PC-9 (cell line): ENCODE measurements at regions of chr17 and their contacts with region 1.

Region 1: DNA sequence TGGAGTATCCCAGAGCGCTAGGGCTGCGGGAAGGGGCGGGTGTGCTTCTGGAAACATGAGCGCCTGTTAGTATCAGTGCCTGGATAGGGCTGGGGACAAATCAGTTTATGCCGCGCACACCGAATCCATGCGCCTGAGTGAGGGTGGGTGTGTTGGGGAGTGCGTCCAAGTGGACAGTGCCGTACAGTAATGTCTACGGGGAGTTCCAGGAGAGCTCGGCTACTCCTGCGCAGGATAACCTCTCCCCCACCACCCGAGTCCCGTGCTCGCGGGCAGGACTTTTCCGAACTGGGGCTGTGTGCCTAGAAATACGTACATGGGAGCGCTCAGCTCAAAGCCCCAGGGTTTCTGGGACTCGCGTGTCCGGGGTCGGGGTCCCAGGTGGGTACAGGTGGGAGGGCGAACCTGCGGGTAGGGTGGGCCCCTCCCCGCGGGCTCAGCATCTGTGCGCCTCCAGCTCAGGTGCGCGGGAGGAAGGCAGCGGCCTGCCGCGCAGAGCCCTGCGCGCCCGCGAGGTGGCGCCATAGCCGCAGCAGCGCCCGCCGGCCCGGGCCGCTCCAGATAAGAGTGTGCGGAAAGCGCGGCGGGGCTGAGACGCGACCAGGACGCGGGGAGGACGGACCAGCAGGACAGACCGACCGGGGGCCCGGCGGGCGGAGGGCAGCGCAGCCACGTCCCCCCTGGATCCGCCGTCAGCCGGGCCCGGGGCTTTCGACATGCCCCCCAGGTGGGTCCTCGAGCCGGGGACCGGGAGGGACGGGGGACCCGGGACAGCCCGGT is at the start of gene HIC1:
- DNase-seq: peak; percentile 57 to 84
- H3K4me3 ChIP-seq: peak within 1 kb of the TSS; percentile 66
- H3K27ac ChIP-seq: no peak within 1 kb of the TSS
- H3K4me1 ChIP-seq: peaks cover 7% of the 10 kb centered on the region; the same call in 1 of the 2 replicates
- H3K27me3 ChIP-seq: peaks cover 12% of the 10 kb centered on the region
- CTCF ChIP-seq: peak; percentile 81
- total RNA-seq, gene HIC1: 0.63 and 1.6 TPM in 2 replicates

Region 2: GRCh38 chr17:1820528-1821252 is 234.0 kb before region 1 on chr17:
- CTCF ChIA-PET with region 1: no interaction called
- POLR2A ChIA-PET with region 1: no interaction called
- intact Hi-C with region 1: no loop called
- DNase-seq: no peak
- H3K4me3 ChIP-seq: no peak overlapping the region
- H3K27ac ChIP-seq: no peak overlapping the region
- H3K4me1 ChIP-seq: no peaks in the 10 kb centered on the region
- H3K27me3 ChIP-seq: no peaks in the 10 kb centered on the region
- CTCF ChIP-seq: no peak

Region 3: DNA sequence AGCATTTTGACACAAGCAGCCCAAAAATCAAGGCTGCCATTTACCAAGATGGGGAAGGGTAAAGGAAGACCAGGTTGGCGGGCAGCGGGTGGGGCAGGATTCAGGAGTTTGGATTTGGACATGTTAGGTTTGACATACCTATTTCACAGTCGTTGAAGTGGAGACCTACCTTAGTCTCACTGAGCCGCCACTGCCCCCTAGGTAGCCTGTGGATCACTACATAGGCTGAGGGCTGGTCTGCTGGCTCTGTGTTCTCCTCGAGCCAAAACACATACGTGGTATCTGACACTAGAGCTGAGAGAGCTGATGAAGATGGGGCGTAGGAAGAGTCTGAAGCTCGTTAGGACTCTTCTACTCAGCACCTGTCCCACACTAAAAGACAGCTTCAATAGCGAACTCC is 115.3 kb after region 1 on chr17:
- CTCF ChIA-PET with region 1: no interaction called
- POLR2A ChIA-PET with region 1: no interaction called
- intact Hi-C with region 1: loop called (anchors 1 kb)
- DNase-seq: peak in 1 of 2 experiments; percentile 22
- H3K4me3 ChIP-seq: no peak overlapping the region
- H3K27ac ChIP-seq: no peak overlapping the region
- H3K4me1 ChIP-seq: no peaks in the 10 kb centered on the region
- H3K27me3 ChIP-seq: no peaks in the 10 kb centered on the region
- CTCF ChIP-seq: peak; percentile 57; the same call in 1 of the 2 replicates

Region 4: DNA sequence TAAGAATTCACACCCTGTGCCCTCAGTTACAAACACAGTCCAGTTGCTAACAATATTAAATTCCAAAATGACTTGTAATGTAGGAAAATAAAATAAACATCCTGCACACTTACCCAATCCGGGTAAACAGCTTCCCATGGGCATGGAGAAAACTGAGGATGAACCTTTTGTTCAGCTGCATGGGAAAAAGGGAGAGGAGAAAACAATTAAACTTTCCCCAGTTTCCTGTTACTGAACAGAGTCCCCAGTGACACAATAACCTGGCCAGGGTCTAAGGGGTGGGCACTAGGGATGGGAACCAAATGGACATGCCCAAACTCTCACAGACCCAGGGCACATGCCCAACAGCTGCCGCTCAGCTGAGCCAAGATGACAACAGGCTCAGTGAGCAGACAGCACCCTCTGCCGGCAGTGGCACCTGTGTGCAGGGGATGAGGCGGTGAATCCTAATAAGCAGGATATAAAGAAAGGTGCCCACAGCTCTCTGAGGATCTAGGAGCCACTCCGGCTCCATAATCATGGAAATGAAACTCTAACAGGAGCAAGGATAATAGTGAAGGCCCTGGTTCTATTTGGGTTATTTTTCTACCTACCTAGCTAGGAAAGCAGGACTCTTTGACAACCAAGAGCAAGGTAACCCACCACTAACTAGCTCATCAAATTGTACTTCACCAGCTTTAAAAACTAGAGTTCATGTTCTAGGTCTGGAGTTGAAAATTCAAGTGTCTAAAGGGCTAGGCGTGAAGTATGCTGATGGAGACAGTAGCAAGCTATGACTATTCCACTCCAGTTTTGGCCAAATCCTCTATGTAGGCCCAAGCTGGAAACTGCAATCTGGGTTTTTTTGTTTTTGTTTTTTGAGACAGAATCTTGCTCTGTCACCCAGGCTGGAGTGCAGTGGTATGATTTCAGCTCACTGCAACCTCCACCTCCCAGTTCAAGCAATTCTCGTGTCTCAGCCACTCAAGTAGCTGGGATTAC is 190.1 kb after region 1 on chr17:
- CTCF ChIA-PET with region 1: interaction called, 14 read pairs
- POLR2A ChIA-PET with region 1: no interaction called
- intact Hi-C with region 1: loop called (anchors 1 kb)
- DNase-seq: peak; percentile 56 to 76
- H3K4me3 ChIP-seq: no peak overlapping the region
- H3K27ac ChIP-seq: no peak overlapping the region
- H3K4me1 ChIP-seq: peaks cover 7% of the 10 kb centered on the region
- H3K27me3 ChIP-seq: no peaks in the 10 kb centered on the region
- CTCF ChIP-seq: peak; percentile 99

Region 5: GRCh38 chr17:2282297-2282873 is 227.7 kb after region 1 on chr17:
- CTCF ChIA-PET with region 1: interaction called, 3 read pairs
- POLR2A ChIA-PET with region 1: no interaction called
- intact Hi-C with region 1: loop called (anchors 5 kb)
- DNase-seq: peak; percentile 6 to 56
- H3K4me3 ChIP-seq: no peak overlapping the region
- H3K27ac ChIP-seq: 0 out of 2 replicates have a peak overlapping the region, but pooled peaks have one; percentile 23
- H3K4me1 ChIP-seq: no peaks in the 10 kb centered on the region
- H3K27me3 ChIP-seq: no peaks in the 10 kb centered on the region
- CTCF ChIP-seq: peak; percentile 81

Region 6: GRCh38 chr17:2357931-2358434 is 303.3 kb after region 1 on chr17:
- CTCF ChIA-PET with region 1: no interaction called
- POLR2A ChIA-PET with region 1: no interaction called
- intact Hi-C with region 1: loop called (anchors 5 kb)
- DNase-seq: no peak
- H3K4me3 ChIP-seq: no peak overlapping the region
- H3K27ac ChIP-seq: peak overlapping the region; percentile 89
- H3K4me1 ChIP-seq: peaks cover 50% of the 10 kb centered on the region
- H3K27me3 ChIP-seq: no peaks in the 10 kb centered on the region
- CTCF ChIP-seq: no peak

Region 7: DNA sequence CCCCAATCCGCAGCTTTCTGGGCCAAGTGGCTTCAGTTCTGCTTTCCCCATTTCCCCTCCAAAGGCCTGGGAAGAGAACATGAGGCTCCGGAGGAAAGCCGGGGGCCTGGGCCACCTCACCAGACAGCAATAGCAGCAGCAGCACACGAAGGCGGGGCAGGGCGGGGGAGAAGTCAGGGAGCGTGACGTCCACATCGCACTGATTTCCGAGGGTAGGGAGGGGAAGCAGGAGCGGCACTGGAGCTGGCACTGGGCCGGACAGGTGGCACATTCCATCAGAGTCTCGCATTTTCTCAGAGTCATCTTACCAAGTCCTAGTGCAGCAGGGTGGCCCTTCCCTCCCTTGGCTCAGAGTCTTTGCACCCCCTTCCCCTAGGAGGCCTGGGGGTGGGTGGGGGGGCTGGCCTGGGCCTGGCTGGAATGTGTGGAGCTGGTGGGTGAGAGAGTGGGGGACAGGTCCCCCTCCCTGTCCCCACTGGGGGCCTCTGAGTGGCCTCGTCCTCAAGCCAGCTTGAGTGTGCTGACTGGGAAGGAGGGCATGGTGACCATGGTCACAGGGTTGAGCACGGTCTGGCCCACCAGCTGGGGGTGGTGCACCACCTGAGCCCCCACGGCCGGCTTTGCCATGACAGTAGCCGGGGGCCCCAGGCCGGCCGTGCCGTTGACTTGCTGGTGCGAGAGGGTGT is 331.8 kb after region 1 on chr17:
- CTCF ChIA-PET with region 1: no interaction called
- POLR2A ChIA-PET with region 1: interaction called, 18 read pairs
- intact Hi-C with region 1: no loop called
- DNase-seq: peak in 1 of 2 experiments; percentile 89
- H3K4me3 ChIP-seq: no peak overlapping the region
- H3K27ac ChIP-seq: no peak overlapping the region
- H3K4me1 ChIP-seq: peaks cover 2% of the 10 kb centered on the region
- H3K27me3 ChIP-seq: no peaks in the 10 kb centered on the region
- CTCF ChIP-seq: no peak

Region 8: DNA sequence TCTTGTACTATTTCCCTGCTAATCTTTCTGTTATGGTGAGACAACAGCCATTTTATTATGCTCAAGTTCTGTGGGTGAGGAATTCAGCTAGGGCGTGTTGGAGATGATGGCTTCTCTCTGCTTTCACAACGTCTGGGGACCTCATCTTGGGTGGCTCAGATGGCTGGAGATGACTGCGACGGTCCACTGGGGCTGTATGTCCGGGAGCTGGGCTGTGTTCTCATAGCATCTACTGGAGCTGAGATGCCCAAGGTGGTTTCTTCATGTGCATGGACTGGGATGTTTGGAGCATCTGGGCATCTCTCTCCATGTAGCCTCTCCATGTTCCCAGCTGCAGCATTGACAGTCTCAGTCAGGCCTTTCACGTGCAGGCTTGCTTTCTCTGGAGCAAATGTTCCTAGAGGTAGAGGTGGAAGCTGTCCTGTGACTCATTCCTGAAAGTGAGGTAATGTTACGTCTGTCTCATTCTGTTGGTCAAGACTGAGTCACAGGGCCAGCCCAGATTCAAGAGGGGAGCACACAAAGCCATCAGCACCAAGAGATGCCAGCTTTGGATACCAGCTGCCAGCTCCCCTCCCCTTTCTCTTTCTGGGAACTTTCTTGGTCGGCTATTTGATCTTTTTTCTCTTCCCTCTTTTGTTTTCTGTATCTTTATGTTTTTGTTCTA is 837.7 kb after region 1 on chr17:
- CTCF ChIA-PET with region 1: interaction called, 10 read pairs
- POLR2A ChIA-PET with region 1: no interaction called
- intact Hi-C with region 1: no loop called
- DNase-seq: peak; percentile 77 to 90
- H3K4me3 ChIP-seq: no peak overlapping the region
- H3K27ac ChIP-seq: peak overlapping the region; percentile 84
- H3K4me1 ChIP-seq: peaks cover 44% of the 10 kb centered on the region
- H3K27me3 ChIP-seq: no peaks in the 10 kb centered on the region
- CTCF ChIP-seq: no peak